ENCODE measurements at regions of chr1 and their contacts with region 1.

Region 1: DNA sequence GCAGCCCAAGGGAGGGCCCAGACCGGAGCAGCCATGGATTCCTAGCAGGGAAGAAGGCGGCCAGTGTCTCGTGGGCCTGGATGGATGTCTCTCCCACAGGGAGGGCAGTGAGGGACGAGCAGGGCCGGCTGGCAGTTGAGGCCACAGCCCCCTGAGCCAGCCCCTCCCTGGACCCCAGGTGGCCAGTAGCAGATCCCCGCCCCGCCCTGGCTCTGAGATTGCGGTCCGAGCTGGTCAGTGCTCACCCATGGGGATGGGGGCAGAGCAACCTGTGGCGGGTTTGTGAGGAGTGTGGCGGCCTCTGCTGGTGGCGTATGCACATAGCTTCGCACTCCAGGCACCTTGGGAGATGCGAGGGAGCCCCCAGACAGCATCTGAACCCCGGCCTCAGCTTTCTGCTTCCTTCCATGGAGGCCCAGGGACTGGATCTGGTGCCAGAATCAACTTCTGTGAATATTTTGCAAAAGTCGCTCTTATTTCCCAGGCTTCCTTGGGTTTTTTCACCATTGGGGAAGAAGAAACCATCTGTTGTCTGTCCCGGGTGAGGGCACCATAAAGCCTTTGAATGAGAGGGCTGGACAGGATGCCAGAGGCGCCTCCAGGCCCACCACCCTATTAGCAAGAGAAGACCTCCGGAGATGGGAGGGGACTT is 8.4 kb upstream of the KCNN3 start:
- DNase-seq: peak; percentile 78
- ATAC-seq: peak; percentile 92
- H3K4me3 Mint-ChIP-seq: no peak overlapping the region
- H3K27ac Mint-ChIP-seq: no peak overlapping the region
- H3K4me1 Mint-ChIP-seq: no peaks in the 10 kb centered on the region
- H3K27me3 Mint-ChIP-seq: peaks cover 2% of the 10 kb centered on the region

Region 2: GRCh38 chr1:154867064-154867825 is 11.3 kb before region 1 on chr1:
- CTCF ChIA-PET with region 1: interaction called, 10 read pairs
- POLR2A ChIA-PET with region 1: interaction called, 5 read pairs
- DNase-seq: no peak
- ATAC-seq: no peak
- H3K4me3 Mint-ChIP-seq: no peak overlapping the region
- H3K27ac Mint-ChIP-seq: no peak overlapping the region
- H3K4me1 Mint-ChIP-seq: peaks cover 35% of the 10 kb centered on the region
- H3K27me3 Mint-ChIP-seq: peaks cover 29% of the 10 kb centered on the region

Region 3: GRCh38 chr1:154891452-154891851 is 13.0 kb after region 1 on chr1:
- CTCF ChIA-PET with region 1: interaction called, 16 read pairs
- POLR2A ChIA-PET with region 1: no interaction called
- DNase-seq: no peak
- ATAC-seq: no peak
- H3K4me3 Mint-ChIP-seq: no peak overlapping the region
- H3K27ac Mint-ChIP-seq: no peak overlapping the region
- H3K4me1 Mint-ChIP-seq: peaks cover 10% of the 10 kb centered on the region
- H3K27me3 Mint-ChIP-seq: peaks cover 11% of the 10 kb centered on the region